PC-3 (cell line): ENCODE measurements at regions of chr19 and their contacts with region 1.

Region 1: GRCh38 chr19:42831271-42832019 is 48.1 kb downstream of the PSG1 start:
- DNase-seq: peak; percentile 81
- ATAC-seq: no peak
- H3K4me3 ChIP-seq: no peak overlapping the region
- H3K27ac ChIP-seq: peak overlapping the region; percentile 99
- H3K4me1 ChIP-seq: peaks cover 22% of the 10 kb centered on the region
- H3K27me3 ChIP-seq: no peaks in the 10 kb centered on the region
- CTCF ChIP-seq: no peak

Region 2: DNA sequence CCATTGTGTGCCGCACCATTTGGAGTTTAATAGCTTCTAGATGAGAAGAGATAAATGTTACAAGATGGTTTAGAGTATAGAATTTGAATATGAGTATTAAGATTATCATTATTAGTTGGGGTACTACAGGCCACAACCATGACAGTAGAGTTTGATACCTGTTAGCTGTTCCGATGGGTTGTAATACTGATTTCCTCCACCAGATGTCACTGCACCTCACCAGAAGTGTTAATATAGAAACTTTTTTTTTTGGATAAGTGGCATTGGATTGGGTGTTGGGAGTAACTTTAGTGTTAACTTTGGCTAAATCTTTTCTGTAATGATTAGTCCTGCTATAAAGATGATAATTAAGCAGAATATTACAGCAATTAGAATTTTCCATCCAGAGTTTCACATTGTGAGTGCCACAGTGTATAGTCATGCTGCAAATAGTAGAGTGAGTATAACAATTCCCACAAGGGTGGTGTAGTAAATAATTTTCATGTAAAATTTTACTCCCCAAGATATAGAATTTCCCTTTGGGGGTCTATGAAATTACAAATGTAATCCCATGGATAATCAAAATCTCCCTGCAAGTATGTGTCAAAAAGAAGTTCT is 147.4 kb before region 1 on chr19:
- CTCF ChIA-PET with region 1: no interaction called
- POLR2A ChIA-PET with region 1: no interaction called
- intact Hi-C with region 1: no loop called
- DNase-seq: peak; percentile 53
- ATAC-seq: no peak
- H3K4me3 ChIP-seq: no peak overlapping the region
- H3K27ac ChIP-seq: no peak overlapping the region
- H3K4me1 ChIP-seq: no peaks in the 10 kb centered on the region
- H3K27me3 ChIP-seq: no peaks in the 10 kb centered on the region
- CTCF ChIP-seq: peak; percentile 69

Region 3: DNA sequence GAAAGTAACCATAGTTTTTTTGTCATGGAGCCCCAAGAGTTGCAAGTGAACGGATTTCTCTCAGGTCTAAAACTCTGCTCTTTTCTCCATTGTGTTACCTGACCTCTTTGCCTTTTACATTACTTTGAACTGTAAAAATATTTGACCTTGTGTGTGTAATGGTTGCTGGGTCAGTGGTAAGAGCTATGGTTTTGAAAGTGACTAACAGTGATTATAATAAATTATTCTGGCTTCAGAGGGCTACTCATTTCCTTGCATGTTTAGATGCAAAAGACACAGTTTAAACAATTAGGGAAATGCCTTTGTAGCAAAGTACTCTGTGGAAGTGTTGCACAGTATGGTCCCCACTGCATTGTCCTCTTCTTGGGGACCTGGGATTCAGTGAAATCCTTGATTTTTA is 36.7 kb before region 1 on chr19:
- CTCF ChIA-PET with region 1: no interaction called
- POLR2A ChIA-PET with region 1: no interaction called
- intact Hi-C with region 1: no loop called
- DNase-seq: no peak
- ATAC-seq: no peak
- H3K4me3 ChIP-seq: no peak overlapping the region
- H3K27ac ChIP-seq: no peak overlapping the region
- H3K4me1 ChIP-seq: peaks cover 13% of the 10 kb centered on the region
- H3K27me3 ChIP-seq: no peaks in the 10 kb centered on the region
- CTCF ChIP-seq: no peak

Region 4: DNA sequence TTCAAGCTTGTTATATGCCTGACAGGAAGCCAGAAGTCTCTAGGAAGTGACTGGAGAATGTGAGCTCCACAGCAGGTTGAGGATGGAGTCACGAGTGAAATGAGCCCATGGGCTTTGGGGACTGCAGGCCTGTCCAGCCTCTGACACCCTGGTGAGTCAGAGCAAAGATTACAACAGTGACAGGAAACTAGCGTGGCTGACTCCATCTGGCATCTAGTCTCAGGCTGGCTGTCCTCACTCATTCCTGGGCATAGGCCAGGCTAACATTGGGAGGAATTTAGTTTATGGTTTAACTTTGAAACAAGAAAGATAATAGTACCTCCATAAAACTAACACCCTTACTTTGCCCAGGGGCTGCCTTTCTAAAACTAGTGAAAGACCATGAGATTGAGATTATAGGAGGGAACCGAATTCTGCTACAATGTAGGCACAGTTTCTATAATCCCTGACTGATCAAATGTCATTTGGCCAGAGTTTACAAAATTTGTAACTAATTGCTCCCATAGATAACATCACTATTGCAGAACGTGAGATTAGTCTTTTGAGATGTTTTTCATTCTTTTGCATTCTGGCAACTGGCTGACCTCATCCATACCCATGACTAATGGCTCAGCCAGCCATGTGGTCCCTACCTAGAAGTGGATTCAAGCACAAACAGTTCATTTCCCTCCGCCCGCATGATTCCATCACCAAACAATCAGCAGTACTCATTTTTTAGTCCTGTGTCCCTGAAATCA is 19.7 kb after region 1 on chr19:
- CTCF ChIA-PET with region 1: no interaction called
- POLR2A ChIA-PET with region 1: no interaction called
- intact Hi-C with region 1: loop called (anchors 2 kb)
- DNase-seq: peak; percentile 92
- ATAC-seq: peak; percentile 92
- H3K4me3 ChIP-seq: peak overlapping the region; percentile 35; the same call in 1 of the 2 replicates
- H3K27ac ChIP-seq: peak overlapping the region; percentile 97
- H3K4me1 ChIP-seq: peaks cover 29% of the 10 kb centered on the region
- H3K27me3 ChIP-seq: no peaks in the 10 kb centered on the region
- CTCF ChIP-seq: no peak